HCT116 (cell line): ENCODE measurements at regions of chr19 and their contacts with region 1.

Region 1: GRCh38 chr19:3075895-3076431 is 13.7 kb upstream of the TLE5 start:
- DNase-seq: no peak
- ATAC-seq: peak; percentile 84
- H3K4me3 ChIP-seq: peak overlapping the region in 1 of 2 experiments; percentile 18; a peak in 2 of 4 replicates
- H3K27ac ChIP-seq: no peak overlapping the region
- H3K4me1 ChIP-seq: peaks cover 30 to 49% of the 10 kb centered on the region in 2 experiments
- H3K27me3 ChIP-seq: no peaks in the 10 kb centered on the region
- CTCF ChIP-seq: peak; percentile 89 to 91 (median 89)
- POLR2A ChIP-seq: no peak
- RAD21 ChIP-seq: peak; percentile 88

Region 2: GRCh38 chr19:3163230-3163886 is 87.4 kb after region 1 on chr19:
- CTCF ChIA-PET with region 1: no interaction called
- POLR2A ChIA-PET with region 1: no interaction called
- RAD21 ChIA-PET with region 1: no interaction called
- intact Hi-C with region 1: loop called (anchors 5 kb)
- DNase-seq: no peak
- ATAC-seq: peak; percentile 98
- H3K4me3 ChIP-seq: no peak overlapping the region
- H3K27ac ChIP-seq: no peak overlapping the region
- H3K4me1 ChIP-seq: peaks cover 5 to 11% of the 10 kb centered on the region in 2 experiments; a peak in 2 of 4 replicates
- H3K27me3 ChIP-seq: no peaks in the 10 kb centered on the region
- CTCF ChIP-seq: peak; percentile 79 to 98 (median 92)
- POLR2A ChIP-seq: no peak
- RAD21 ChIP-seq: peak; percentile 92